Endothelial cell of umbilical vein (primary cell): ENCODE measurements at regions of chr2 and their contacts with region 1.

Region 1: DNA sequence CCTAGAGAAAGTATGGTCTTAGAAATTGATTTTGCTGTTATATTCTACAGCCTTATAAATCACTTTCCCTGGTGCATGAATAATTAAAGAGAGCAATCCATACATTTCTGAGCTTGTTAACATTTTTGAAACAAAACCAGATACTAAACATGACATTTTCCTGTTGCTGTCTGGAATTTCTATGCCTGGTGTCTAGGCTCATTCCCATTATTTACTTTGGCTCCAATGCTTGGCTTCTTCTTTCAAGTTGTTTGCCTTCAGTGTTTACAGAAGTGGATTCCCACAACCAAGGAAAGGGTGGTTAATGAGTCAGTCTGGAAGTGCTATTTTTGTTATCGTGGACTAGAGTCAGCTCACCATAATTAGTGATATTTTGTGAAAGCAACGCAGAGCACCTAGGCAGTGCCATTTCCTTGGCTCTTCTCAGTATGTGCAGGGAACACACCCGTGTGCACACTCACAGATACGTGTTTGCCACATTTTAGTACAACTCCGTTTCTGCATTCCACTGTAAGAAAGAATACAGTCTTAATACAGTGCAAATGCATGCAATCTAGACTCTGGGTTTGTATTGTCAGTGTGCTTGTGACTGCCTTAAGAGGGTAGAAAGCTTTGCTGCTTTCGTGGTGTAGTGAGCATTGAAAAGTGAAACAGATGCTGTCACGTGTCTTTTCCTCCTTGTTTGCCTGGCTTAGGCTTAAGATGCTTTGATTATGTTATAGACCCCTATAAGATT is 185.0 kb upstream of the RASGRP3 start:
- DNase-seq: peak; percentile 99
- H3K4me3 ChIP-seq: peak overlapping the region in 2 of 3 experiments; percentile 20 to 29
- H3K27ac ChIP-seq: peak overlapping the region; percentile 92
- H3K4me1 ChIP-seq: peaks cover 40% of the 10 kb centered on the region
- H3K27me3 ChIP-seq: no peaks in the 10 kb centered on the region
- CTCF ChIP-seq: no peak
- POLR2A ChIP-seq: no peak

Region 2: DNA sequence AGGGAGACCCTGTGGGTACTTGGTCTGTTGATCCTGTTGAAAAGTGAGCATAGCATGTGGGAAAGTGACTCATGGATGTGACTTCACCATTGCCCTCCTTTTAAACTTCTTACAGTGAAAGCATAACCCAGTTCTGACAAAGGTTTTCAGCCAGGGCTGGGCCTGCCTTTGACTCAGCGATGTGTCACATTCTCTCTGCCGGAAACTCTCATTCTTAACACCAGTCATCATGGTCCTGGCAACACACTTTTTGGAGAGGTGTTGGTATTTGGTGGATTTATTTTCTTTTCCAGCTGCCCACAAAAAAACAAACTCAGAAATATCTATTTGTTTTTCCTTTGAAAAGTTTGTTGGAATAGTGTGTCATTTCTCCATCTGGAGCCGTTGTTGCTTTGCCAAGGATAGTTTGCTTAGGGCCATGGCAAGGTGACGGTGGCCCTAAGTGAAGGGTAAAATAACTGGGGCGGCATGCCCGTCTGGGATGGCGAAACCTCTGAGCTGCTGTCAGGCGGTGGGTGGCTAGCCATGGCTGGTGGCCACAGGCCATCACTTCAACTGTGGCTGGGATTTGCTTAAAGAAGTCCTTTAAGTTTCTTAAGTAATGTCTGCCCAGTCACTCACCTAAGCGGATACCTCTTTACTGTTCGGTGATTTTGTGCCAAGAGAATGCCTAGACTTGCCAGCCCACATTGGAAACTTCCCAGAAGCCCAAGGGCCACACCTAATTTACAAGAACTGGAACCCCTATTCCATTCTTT is 221.4 kb before region 1 on chr2:
- CTCF ChIA-PET with region 1: no interaction called
- POLR2A ChIA-PET with region 1: no interaction called
- dilution Hi-C with region 1: no loop called
- intact Hi-C with region 1: loop called (anchors 1 kb)
- DNase-seq: peak; percentile 98
- H3K4me3 ChIP-seq: no peak overlapping the region
- H3K27ac ChIP-seq: peak overlapping the region; percentile 98
- H3K4me1 ChIP-seq: peaks cover 60% of the 10 kb centered on the region
- H3K27me3 ChIP-seq: no peaks in the 10 kb centered on the region
- CTCF ChIP-seq: no peak
- POLR2A ChIP-seq: no peak

Region 3: GRCh38 chr2:33242845-33243244 is 48.6 kb before region 1 on chr2:
- CTCF ChIA-PET with region 1: interaction called, 3 read pairs
- POLR2A ChIA-PET with region 1: no interaction called
- dilution Hi-C with region 1: no loop called
- intact Hi-C with region 1: loop called (anchors 1 kb)
- DNase-seq: peak; percentile 90
- H3K4me3 ChIP-seq: no peak overlapping the region
- H3K27ac ChIP-seq: peak overlapping the region; percentile 72
- H3K4me1 ChIP-seq: peaks cover 48% of the 10 kb centered on the region
- H3K27me3 ChIP-seq: no peaks in the 10 kb centered on the region
- CTCF ChIP-seq: no peak
- POLR2A ChIP-seq: no peak

Region 4: DNA sequence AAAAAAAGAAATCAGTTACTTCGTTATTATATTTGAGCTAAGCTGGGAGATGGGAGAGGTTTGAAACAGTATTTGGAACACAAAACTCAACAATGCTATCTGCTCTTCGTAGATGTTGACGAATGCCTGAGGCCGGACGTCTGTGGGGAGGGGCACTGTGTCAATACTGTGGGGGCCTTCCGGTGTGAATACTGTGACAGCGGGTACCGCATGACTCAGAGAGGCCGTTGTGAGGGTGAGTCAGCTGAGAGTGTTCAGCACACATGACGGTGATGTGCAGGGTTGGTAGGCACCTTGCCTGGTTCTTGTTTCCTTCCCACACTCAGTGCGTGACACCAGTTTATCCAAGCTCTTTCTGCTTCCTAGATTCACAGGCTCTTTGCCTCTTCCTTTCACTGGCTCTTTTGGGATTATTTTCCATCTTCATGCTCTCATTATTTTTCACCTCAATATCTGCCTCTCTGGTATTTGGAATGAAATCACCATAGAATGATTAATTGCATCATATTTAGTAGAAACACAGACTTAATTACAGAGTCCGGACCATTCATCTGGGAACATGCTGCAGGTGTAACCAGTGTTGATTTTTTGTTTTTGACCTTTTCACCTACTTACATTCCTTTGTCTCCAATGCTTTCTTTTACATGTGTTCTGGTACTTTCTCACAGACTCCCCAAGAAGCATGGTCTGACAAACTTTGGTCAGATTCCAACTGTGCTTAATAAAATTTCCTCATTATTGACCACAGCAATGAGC is 15.6 kb before region 1 on chr2:
- CTCF ChIA-PET with region 1: interaction called, 6 read pairs
- POLR2A ChIA-PET with region 1: no interaction called
- dilution Hi-C with region 1: no loop called
- intact Hi-C with region 1: loop called (anchors 1 kb)
- DNase-seq: peak; percentile 80
- H3K4me3 ChIP-seq: no peak overlapping the region
- H3K27ac ChIP-seq: peak overlapping the region; percentile 84
- H3K4me1 ChIP-seq: peaks cover 6% of the 10 kb centered on the region
- H3K27me3 ChIP-seq: no peaks in the 10 kb centered on the region
- CTCF ChIP-seq: no peak
- POLR2A ChIP-seq: no peak

Region 5: GRCh38 chr2:33336036-33336625 is 44.7 kb after region 1 on chr2:
- CTCF ChIA-PET with region 1: interaction called, 4 read pairs
- POLR2A ChIA-PET with region 1: no interaction called
- dilution Hi-C with region 1: no loop called
- intact Hi-C with region 1: loop called (anchors 1 kb)
- DNase-seq: peak; percentile 17
- H3K4me3 ChIP-seq: no peak overlapping the region
- H3K27ac ChIP-seq: peak overlapping the region; percentile 41
- H3K4me1 ChIP-seq: peaks cover 21% of the 10 kb centered on the region
- H3K27me3 ChIP-seq: no peaks in the 10 kb centered on the region
- CTCF ChIP-seq: no peak
- POLR2A ChIP-seq: no peak

Region 6: GRCh38 chr2:33342171-33342570 is 50.7 kb after region 1 on chr2:
- CTCF ChIA-PET with region 1: interaction called, 4 read pairs
- POLR2A ChIA-PET with region 1: no interaction called
- dilution Hi-C with region 1: no loop called
- intact Hi-C with region 1: loop called (anchors 1 kb)
- DNase-seq: peak; percentile 98
- H3K4me3 ChIP-seq: no peak overlapping the region
- H3K27ac ChIP-seq: peak overlapping the region; percentile 99
- H3K4me1 ChIP-seq: peaks cover 28% of the 10 kb centered on the region
- H3K27me3 ChIP-seq: no peaks in the 10 kb centered on the region
- CTCF ChIP-seq: no peak
- POLR2A ChIP-seq: peak; percentile 40

Region 7: GRCh38 chr2:33366473-33366872 is 75.0 kb after region 1 on chr2:
- CTCF ChIA-PET with region 1: interaction called, 9 read pairs
- POLR2A ChIA-PET with region 1: no interaction called
- dilution Hi-C with region 1: no loop called
- intact Hi-C with region 1: loop called (anchors 2 kb)
- DNase-seq: peak; percentile 97
- H3K4me3 ChIP-seq: no peak overlapping the region
- H3K27ac ChIP-seq: peak overlapping the region; percentile 3
- H3K4me1 ChIP-seq: peaks cover 3% of the 10 kb centered on the region
- H3K27me3 ChIP-seq: no peaks in the 10 kb centered on the region
- CTCF ChIP-seq: no peak
- POLR2A ChIP-seq: no peak

Region 8: DNA sequence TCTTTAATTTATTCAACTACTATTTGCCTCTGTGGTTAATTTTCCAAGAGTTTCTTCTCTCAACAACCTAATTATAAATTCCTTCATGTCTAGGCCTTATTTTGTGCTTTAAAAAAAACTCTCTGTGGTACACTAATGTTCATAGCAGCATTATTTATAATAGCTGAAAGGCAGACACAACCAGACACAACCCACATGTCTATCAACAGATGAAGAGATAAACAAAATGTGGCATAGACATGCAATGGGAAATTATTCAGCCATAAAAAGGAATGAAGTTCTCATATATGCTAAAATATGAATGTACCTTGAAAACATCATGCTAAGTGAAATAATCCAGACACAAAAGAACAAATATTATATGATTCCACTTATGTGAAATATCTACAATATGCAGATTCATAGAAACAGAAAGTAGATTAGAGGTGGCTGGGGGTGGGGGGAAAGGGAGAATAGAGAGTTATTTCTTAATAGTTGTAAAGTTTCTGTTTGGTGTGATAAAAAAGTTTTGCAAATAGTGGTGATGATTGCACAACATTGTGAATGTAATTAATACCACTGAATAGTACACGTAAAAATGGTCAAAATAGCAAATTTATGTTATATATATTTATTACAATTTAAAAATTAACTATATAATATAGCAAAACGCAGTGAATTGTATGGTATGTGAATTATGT is 156.9 kb after region 1 on chr2:
- CTCF ChIA-PET with region 1: no interaction called
- POLR2A ChIA-PET with region 1: no interaction called
- dilution Hi-C with region 1: no loop called
- intact Hi-C with region 1: no loop called
- DNase-seq: no peak
- H3K4me3 ChIP-seq: no peak overlapping the region
- H3K27ac ChIP-seq: no peak overlapping the region
- H3K4me1 ChIP-seq: peaks cover 1% of the 10 kb centered on the region
- H3K27me3 ChIP-seq: no peaks in the 10 kb centered on the region
- CTCF ChIP-seq: no peak
- POLR2A ChIP-seq: no peak